ENCODE measurements at regions of chr6 and their contacts with region 1.

Region 1: GRCh38 chr6:169529931-169530751 is 171.7 kb downstream of the WDR27 start:
- DNase-seq: peak; percentile 89
- H3K4me3 ChIP-seq: no peak overlapping the region
- H3K27ac ChIP-seq: peak overlapping the region; percentile 58 to 82 (median 78)
- H3K4me1 ChIP-seq: peaks cover 0 to 39% (median 28%) of the 10 kb centered on the region in 4 donors
- H3K27me3 ChIP-seq: no peaks in the 10 kb centered on the region
- CTCF ChIP-seq: no peak
- EP300 ChIP-seq: peak in 3 of 4 donors; percentile 78 to 92 (median 91)
- POLR2A ChIP-seq: no peak

Region 2: DNA sequence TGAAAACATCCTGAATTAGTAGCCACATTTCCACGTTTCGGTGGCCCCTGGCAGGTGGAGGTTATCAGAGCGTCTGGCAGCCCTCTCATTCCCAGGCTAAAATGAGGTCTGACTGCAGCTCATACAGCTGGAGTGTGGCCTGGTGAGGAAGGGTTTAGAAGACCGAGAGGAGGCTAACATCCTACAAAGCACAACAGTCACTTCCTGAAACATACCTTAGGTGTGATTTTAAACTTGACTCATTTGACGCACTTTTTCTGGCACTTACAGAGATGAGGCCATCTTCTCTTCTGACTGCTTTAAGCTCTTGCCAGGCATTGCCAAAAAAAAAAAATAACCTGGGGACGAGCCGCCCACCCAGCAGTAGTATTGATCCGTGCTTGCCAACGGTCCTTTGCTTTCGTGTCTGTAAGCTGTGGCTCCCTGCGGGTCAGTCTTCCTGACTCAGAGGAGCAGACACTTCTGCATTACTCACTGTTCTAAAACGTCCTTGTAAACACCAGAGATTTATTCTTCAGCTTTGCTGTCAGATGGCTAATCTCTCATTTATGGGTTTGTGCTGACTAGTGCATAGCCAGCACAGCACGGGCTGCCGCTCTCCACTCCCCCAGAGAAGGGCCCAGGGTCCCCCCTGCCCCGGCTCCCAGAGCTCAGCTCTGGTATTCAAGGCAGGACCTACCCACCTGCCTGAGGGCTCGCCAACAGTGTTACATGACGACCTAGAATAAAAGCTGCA is 1372.7 kb before region 1 on chr6:
- intact Hi-C with region 1: loop called (anchors 10 kb)
- DNase-seq: peak; percentile 74
- H3K4me3 ChIP-seq: peak overlapping the region in 2 of 4 donors; percentile 3 to 28
- H3K27ac ChIP-seq: peak overlapping the region; percentile 42 to 83 (median 78)
- H3K4me1 ChIP-seq: peaks cover 2 to 80% (median 62%) of the 10 kb centered on the region in 4 donors
- H3K27me3 ChIP-seq: no peaks in the 10 kb centered on the region
- CTCF ChIP-seq: no peak
- EP300 ChIP-seq: peak; percentile 46 to 95 (median 78)
- POLR2A ChIP-seq: no peak

Region 3: DNA sequence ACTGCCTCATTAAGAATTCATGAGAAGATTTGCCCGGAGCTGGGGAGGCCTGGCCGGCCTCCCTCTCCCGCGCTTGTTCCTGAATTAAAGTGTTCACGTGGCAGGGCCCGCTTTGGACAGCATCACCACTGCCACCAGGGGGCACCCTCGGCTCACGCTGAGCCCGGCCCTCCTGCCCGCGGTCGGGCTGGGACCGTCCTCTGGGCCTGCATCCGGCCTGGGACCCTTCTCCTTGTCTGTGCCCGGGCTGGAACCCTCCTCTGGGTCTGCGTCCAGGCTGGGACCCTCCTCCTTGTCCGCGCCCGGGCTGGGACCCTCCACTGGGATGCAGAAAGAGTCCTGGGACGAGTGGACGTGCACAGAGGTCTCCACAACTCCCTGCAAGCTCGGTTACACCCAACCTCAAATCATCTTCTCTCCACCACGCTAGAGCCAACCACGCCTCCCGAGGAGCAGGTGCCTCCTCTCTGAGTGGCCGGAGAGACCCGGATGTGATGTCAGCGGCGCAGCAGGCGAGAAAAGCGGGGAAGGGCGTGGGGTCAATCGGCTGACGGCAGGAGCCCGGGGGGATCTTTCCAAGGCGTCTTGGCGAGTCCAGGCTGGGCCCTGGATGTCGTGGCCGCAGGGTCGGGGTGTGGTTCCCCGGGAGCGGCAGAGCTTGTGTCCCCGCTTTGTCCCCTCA is 1159.7 kb before region 1 on chr6:
- intact Hi-C with region 1: loop called (anchors 10 kb)
- DNase-seq: peak; percentile 89
- H3K4me3 ChIP-seq: no peak overlapping the region
- H3K27ac ChIP-seq: no peak overlapping the region
- H3K4me1 ChIP-seq: peaks cover 0 to 29% (median 16%) of the 10 kb centered on the region in 4 donors
- H3K27me3 ChIP-seq: no peaks in the 10 kb centered on the region
- CTCF ChIP-seq: peak; percentile 78 to 94 (median 86)
- EP300 ChIP-seq: no peak
- POLR2A ChIP-seq: no peak